Activated CD4-positive, alpha-beta T cell treated with anti-CD3 and anti-CD28 coated beads, Interleukin-2, amount 10 ng/mL, durations not matched to agents 24 days and 14 days (primary cell): ENCODE measurements at regions of chr1 and their contacts with region 1.

Region 1: DNA sequence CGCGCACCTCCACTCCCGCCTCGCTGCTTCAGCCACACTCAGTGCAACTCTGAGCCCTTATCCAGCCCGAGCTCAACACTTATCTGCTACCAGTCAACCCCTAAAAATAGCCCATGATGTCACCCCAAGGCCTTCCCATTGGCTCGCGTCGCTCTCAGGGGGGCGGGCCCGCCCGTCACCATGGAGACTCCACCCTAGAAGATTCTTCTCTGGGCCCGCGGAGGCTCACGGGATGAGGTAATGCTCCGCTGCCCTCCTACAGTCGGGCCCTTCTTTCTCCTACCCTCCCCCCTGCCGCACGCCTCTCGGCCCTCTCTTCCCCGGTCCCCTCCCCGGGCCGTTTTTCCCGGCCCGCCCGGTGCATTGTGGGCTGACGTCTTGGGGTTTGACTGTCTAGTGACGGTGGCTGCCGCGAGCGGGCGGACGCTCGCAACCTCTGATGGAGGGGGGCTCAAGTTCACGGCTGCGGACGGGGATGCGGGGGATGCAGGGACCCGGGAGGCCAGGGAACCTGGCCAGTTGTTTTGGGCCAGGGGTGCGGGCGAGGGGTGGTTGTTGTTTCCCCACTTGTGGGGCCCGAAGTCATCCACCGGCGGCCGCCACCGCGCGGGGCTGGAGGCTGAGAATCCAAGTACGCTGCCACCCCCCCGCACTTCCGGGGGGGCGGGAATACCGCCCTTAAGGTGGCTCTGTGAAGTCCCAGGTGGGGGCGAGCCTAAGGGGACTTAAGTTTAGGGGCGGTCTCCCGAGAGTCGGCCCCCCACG is at the start of gene JUN:
- DNase-seq: peak; percentile 99
- H3K4me3 Mint-ChIP-seq: peak within 1 kb of the TSS; percentile 97
- H3K27ac Mint-ChIP-seq: peak within 1 kb of the TSS; percentile 99
- H3K4me1 Mint-ChIP-seq: peaks cover 36% of the 10 kb centered on the region
- H3K27me3 Mint-ChIP-seq: peaks cover 7% of the 10 kb centered on the region
- total RNA-seq, gene JUN: 51.6 and 52.6 TPM in 2 replicates

Region 2: DNA sequence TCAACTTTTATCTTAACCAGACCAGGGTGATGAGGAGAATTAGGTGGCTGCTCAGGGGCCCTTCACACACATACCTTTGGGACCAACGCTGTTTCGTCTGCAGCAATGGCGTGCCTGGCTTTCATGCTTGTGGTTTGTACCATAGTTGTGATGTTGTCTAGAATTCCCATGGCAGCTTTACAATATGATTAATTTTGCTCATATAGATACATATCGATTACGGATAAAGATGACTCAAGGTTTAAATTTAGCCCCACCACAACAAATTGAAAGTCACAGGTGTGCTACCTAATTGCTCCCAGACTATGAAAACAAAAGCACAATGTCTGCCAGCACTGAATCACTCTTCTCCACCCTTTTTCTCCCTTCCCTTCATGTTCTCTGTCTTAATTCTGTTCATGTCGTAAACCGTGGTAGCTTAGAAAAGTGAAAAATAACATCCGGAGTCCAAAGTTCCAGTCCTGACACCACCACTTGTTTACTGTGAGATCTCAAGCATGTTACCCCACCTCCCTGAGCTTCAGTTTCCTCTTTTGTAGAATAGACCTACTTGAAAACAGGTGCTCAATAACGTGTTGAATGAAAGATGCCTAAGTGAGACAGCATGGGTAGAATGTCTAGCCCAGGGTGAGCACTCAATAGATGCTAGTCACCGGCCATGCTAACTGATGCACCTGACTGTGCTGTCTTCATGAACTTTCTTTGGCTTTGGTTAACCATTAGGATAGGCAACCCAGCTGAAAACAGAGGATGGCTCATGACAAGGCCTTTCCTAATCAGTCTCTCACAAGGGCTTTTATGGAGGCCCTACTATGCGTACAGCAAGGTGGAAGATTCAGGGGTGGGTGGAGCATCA is 21.8 kb after region 1 on chr1:
- intact Hi-C with region 1: no loop called
- DNase-seq: no peak
- H3K4me3 Mint-ChIP-seq: no peak overlapping the region
- H3K27ac Mint-ChIP-seq: no peak overlapping the region
- H3K4me1 Mint-ChIP-seq: peaks cover 17% of the 10 kb centered on the region
- H3K27me3 Mint-ChIP-seq: no peaks in the 10 kb centered on the region

Region 3: GRCh38 chr1:58816072-58816746 is 32.0 kb after region 1 on chr1:
- intact Hi-C with region 1: loop called (anchors 1 kb)
- DNase-seq: peak; percentile 96
- H3K4me3 Mint-ChIP-seq: peak overlapping the region; percentile 87
- H3K27ac Mint-ChIP-seq: peak overlapping the region; percentile 87
- H3K4me1 Mint-ChIP-seq: peaks cover 47% of the 10 kb centered on the region
- H3K27me3 Mint-ChIP-seq: no peaks in the 10 kb centered on the region

Region 4: DNA sequence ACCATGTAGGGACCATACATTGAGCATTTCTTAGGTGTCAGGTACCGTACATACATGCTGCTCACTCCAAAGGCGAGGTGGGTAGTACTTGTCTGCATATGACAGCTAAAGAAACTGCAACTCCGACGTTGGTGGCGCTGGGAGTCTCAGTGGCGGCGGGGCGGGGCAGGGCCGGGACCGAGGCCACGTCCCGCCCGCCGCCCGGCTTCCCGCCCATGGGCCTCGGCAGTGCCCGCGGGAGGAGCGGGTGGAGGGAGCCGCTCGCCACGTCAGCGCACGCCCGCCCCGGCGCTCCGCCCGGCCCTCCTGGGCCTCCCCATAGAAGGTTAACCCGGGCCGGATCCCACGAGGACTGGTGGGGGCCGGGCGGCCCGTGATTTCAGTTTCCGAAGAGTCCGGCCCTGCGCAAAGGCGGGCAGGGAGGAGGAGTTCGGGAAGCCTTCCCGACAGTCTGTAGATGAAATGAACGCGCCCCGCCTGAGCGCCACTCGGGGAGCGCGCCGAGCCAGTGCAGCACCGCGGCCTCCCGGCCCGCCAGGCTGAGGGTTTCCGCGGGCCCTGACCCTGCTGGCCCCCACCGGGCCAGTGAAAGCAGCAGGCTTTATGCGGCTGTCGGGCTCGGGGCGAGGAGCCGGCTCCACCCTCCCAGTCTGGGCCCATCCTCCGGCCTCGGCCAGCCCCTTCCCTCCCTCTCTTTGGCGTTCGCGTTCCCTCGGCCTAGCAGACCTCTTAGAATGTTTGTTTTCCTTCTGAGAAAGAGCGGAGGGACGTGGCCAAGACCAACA is 119.5 kb after region 1 on chr1:
- intact Hi-C with region 1: loop called (anchors 1 kb)
- DNase-seq: peak; percentile 94
- H3K4me3 Mint-ChIP-seq: peak overlapping the region; percentile 80
- H3K27ac Mint-ChIP-seq: peak overlapping the region; percentile 91
- H3K4me1 Mint-ChIP-seq: peaks cover 20% of the 10 kb centered on the region
- H3K27me3 Mint-ChIP-seq: no peaks in the 10 kb centered on the region

Region 5: DNA sequence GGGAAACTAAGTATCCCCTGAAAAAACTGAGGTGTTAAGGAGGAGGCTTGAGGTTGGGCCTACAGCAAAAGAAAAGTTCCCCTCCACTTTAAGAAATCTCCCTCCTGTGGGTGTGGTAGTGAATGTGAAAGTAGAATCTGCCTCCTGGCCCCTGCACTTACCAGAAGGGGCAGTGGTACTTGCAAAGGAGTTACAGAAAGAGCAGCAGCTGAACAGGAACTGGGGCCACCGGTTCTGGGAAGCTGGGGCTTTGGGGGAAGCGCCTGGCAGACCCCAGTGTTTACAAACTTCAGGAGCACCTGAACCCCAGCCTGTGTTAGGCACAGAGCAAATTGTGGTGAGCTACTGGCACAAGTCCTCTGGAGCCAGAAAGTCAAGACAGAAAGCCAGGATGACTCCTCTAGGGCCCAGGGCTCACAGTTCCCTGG is 262.6 kb after region 1 on chr1:
- intact Hi-C with region 1: loop called (anchors 1 kb)
- DNase-seq: peak; percentile 89
- H3K4me3 Mint-ChIP-seq: peak overlapping the region; percentile 76
- H3K27ac Mint-ChIP-seq: peak overlapping the region; percentile 96
- H3K4me1 Mint-ChIP-seq: peaks cover 60% of the 10 kb centered on the region
- H3K27me3 Mint-ChIP-seq: no peaks in the 10 kb centered on the region

Region 6: DNA sequence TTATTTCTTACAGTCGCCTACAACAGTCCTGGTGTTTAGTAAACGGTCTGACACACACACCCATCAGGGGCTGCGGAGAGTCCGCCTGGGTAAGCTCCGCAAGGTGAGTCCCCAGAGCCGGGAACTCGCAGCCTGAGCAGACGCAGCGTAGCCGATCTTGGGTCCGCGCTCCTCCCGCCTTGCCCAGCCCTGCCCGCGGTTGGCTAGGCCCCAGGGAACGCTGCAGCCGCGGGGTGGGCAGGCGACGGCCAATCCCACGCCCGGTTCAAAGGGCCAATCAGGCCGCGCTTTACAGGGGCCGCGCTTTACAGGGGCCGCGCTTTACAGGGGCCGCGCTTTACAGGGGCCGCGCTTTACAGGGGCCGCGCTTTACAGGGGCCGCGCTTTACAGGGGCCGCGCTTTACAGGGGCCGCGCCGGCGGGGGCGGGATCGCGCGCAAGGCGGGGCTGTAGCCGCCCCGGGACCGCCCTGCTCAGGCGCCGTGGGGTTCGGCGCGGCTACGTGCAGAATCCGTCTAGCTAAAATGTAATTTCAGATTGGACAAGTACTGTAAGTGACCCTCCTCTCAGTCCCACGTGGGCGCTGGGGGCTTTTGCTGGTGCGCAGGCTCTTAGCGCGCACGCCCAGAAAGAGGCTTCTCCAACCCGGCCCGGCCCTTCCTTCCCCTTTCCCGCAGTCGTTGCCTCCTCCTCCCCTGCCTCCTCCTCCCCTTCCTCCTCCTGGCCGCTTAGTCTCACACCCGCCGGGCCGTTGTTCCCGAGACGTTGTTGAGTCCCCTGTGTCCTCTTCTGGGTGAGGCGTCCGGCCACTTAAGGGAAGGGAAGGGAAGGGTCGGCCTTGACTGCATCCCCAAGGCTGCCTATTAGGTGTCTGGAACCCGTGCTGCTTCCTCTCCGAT is 512.4 kb after region 1 on chr1 and contains the start of gene FGGY:
- intact Hi-C with region 1: loop called (anchors 1 kb)
- DNase-seq: peak; percentile 96
- H3K4me3 Mint-ChIP-seq: peak within 1 kb of the TSS; percentile 85
- H3K27ac Mint-ChIP-seq: peak within 1 kb of the TSS; percentile 91
- H3K4me1 Mint-ChIP-seq: peaks cover 36% of the 10 kb centered on the region
- H3K27me3 Mint-ChIP-seq: no peaks in the 10 kb centered on the region
- total RNA-seq, gene FGGY: 6.2 and 8.1 TPM in 2 replicates

Region 7: DNA sequence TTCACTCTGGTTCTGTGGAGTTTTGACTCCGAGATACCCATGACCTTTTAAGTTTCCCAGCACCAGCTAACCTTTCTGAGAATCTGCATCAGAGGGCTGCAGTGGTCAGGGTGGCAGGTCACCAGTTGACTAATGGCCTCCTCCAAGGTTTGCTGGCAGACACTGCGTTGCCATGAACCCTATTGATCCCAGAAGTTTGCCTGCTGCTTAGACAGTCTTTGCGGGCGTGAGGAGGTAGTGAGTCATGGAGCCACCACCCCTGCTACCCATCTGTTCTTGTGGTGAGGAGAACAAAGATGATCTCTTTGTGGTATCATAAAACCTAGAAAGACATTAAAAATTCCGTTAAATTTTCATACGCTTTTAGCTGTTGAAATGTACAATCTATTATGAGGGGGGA is 693.1 kb after region 1 on chr1:
- intact Hi-C with region 1: loop called (anchors 5 kb)
- DNase-seq: peak; percentile 79
- H3K4me3 Mint-ChIP-seq: peak overlapping the region; percentile 32
- H3K27ac Mint-ChIP-seq: peak overlapping the region; percentile 75
- H3K4me1 Mint-ChIP-seq: peaks cover 19% of the 10 kb centered on the region
- H3K27me3 Mint-ChIP-seq: no peaks in the 10 kb centered on the region

Region 8: DNA sequence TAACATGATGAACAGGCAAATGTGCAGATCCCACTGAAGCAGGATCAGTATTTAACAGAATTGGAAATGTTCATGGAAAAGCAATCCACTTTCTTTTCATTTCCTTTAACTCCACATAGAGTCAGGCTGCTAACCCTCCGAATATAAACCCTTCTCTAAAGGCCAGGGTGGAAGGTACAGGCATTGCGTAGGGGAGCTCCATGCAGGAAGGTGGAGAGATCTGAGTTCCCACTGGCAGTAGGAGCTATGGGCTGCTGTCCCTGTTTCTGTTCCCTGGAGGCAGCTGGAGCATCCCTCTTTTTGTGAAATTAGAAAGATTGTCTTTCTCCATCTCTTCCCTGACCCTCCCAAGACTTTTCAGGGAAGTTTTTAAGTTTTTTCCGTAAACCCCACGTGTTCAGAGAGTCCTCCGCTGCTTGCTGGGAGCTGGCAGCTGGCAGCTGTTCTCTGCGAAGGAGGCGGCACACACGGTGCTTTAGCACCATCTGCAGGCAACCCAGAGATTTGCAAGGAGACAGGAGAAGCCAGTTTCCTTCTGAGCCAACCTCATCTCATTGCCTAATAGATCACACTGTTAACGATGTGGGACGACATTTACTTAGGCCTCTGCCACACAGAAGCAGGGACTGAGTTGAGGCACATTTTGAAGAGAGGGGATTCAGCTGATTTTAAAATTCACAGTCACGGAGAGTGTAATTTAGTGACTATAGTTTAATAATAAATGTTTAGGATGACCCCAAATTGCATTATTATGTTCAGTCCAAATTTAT is 975.2 kb after region 1 on chr1:
- intact Hi-C with region 1: loop called (anchors 2 kb)
- DNase-seq: peak; percentile 92
- H3K4me3 Mint-ChIP-seq: peak overlapping the region; percentile 40
- H3K27ac Mint-ChIP-seq: no peak overlapping the region
- H3K4me1 Mint-ChIP-seq: peaks cover 4% of the 10 kb centered on the region
- H3K27me3 Mint-ChIP-seq: no peaks in the 10 kb centered on the region